PC-9 (cell line): ENCODE measurements at regions of chr3 and their contacts with region 1.

Region 1: GRCh38 chr3:101573449-101574387 is at the start of gene PCNP:
- DNase-seq: peak; percentile 99 to 100
- H3K4me3 ChIP-seq: peak within 1 kb of the TSS; percentile 87
- H3K27ac ChIP-seq: peak within 1 kb of the TSS; percentile 80
- H3K4me1 ChIP-seq: peaks cover 22% of the 10 kb centered on the region
- H3K27me3 ChIP-seq: no peaks in the 10 kb centered on the region
- CTCF ChIP-seq: peak; percentile 100
- total RNA-seq, gene PCNP: 164 and 223 TPM in 2 replicates

Region 2: DNA sequence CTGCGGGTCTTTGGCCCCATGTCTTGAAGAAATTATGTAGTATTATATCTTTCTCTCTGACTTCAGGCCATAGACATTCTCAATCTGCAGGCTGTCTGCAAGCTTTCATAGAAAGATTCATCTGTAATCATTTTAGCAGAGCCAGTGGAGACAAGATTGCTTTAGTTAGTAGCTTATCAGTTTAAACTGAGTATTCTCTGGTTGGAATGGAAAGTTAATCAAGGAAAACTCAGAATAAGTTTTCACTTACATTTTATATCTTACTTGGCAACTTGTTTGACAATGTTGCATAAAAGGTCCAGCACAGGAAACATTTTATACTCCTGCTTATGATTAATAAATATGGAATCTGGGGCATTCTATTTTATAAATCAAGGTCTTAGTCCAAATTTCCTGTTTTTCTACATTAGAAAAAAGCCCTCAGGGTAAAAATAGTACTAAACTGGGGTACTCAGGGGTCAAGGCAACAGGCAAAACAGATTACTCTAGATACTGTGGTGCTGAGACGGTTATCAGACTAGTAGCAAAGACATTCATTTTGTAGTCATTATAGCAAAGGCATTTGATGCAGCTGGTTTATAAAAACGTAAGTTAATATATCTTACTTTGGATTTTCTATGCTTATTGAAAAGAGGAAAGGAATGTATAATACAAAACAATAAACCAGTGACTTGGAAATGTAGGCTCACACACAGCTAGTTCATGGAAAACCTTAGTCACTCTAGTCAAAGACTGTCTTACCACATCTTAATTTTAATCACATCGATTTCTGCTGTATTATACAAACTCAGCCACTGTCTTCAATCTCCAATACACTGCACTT is 1414.2 kb before region 1 on chr3:
- CTCF ChIA-PET with region 1: no interaction called
- POLR2A ChIA-PET with region 1: interaction called, 10 read pairs
- intact Hi-C with region 1: no loop called
- DNase-seq: peak; percentile 29 to 97
- H3K4me3 ChIP-seq: peak overlapping the region; percentile 10
- H3K27ac ChIP-seq: peak overlapping the region; percentile 75
- H3K4me1 ChIP-seq: peaks cover 39% of the 10 kb centered on the region
- H3K27me3 ChIP-seq: no peaks in the 10 kb centered on the region
- CTCF ChIP-seq: no peak

Region 3: DNA sequence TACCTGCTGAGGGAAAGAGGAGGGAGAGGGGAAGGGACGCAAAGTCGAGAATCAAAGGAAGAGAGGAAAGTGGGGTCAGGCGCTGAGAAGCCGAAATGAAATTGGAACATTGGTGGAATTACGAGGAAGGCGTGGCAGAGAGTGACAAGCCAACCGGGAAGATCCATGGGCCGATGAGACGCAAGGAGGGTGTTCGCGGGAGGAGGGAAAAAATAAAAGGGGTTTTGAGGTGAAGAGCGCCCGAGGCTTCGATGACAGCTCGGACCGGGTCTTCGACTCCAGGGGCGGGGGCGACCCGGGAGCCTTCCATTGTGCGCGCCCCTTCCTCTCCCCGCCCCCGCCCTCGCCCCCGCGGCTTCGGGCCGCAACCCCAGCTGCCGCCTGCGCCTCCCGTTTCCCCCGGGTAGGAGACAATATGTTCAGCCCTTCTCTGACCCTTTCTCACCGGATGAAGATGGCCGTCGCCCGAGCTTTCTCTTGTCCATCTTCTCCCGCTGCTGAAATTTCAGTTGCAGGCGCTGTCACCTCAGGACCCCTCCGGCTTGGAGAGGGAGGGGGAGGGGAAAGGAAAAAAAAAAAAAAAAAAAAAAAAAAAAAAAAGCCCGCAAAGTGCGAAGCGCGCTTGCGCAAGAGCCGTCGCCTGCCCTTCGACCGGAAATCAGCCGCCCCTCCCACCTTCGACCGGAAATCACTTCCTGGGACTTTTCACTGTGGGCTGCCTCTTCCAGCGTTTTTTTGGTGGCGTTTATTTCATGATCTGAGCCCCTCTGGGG is 60.9 kb before region 1 on chr3 and contains the start of gene SENP7:
- CTCF ChIA-PET with region 1: no interaction called
- POLR2A ChIA-PET with region 1: interaction called, 8 read pairs
- intact Hi-C with region 1: loop called (anchors 1 kb)
- DNase-seq: peak; percentile 79 to 84
- H3K4me3 ChIP-seq: peak within 1 kb of the TSS; percentile 73
- H3K27ac ChIP-seq: peak within 1 kb of the TSS; percentile 83
- H3K4me1 ChIP-seq: peaks cover 21% of the 10 kb centered on the region
- H3K27me3 ChIP-seq: no peaks in the 10 kb centered on the region
- CTCF ChIP-seq: no peak
- total RNA-seq, gene SENP7: 11.1 and 17.4 TPM in 2 replicates

Region 4: GRCh38 chr3:101556064-101556463 is 17.7 kb before region 1 on chr3:
- CTCF ChIA-PET with region 1: interaction called, 9 read pairs
- POLR2A ChIA-PET with region 1: interaction called, 15 read pairs
- intact Hi-C with region 1: loop called (anchors 1 kb)
- DNase-seq: no peak
- H3K4me3 ChIP-seq: no peak overlapping the region
- H3K27ac ChIP-seq: no peak overlapping the region
- H3K4me1 ChIP-seq: peaks cover 5% of the 10 kb centered on the region; the same call in 1 of the 2 replicates
- H3K27me3 ChIP-seq: peaks cover 18% of the 10 kb centered on the region; the same call in 1 of the 2 replicates
- CTCF ChIP-seq: no peak

Region 5: DNA sequence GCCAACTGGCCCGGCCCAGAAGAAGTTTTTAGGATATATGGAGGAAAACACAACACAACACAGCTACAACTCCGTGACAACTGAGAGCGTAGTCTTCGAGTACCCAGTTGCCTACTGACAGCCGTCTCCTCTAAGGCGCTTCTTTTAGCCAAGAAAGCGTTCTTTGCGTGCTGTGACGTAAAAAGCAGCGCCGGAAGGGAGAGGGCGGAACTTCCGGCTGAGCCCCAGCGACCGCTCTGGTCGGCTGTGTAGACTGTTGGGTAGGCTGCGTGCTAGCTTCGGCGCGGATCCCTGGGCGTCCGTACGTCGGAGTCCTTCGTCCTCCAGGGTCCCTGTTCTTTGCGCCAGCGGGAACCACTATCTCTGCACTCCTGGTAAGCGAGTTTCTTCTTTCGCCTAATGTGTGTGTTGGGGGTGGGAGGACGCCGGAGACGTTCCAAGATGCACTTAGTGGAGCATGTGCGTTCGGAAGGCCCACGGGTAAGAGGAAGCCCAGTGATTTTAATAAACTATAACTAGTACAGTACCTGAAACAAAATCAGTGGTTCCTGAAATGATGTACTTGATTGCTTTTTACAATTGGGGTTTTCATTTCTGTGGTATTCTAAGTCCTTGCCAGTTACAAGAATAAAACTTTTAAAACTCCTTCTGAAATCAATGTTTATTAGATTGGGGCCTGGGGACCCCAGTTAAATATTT is 11.9 kb before region 1 on chr3 and contains the start of gene TRMT10C:
- CTCF ChIA-PET with region 1: interaction called, 12 read pairs
- POLR2A ChIA-PET with region 1: interaction called, 9 read pairs
- intact Hi-C with region 1: loop called (anchors 1 kb)
- DNase-seq: peak; percentile 92 to 95
- H3K4me3 ChIP-seq: peak within 1 kb of the TSS; percentile 79
- H3K27ac ChIP-seq: peak within 1 kb of the TSS; percentile 77
- H3K4me1 ChIP-seq: peaks cover 20% of the 10 kb centered on the region
- H3K27me3 ChIP-seq: peaks cover 13% of the 10 kb centered on the region; the same call in 1 of the 2 replicates
- CTCF ChIP-seq: 0 out of 2 replicates have a peak, but pooled peaks have one; percentile 25
- total RNA-seq, gene TRMT10C: 26.0 and 34.2 TPM in 2 replicates

Region 6: GRCh38 chr3:101758224-101758623 is 184.5 kb after region 1 on chr3:
- CTCF ChIA-PET with region 1: no interaction called
- POLR2A ChIA-PET with region 1: no interaction called
- intact Hi-C with region 1: no loop called
- DNase-seq: no peak
- H3K4me3 ChIP-seq: no peak overlapping the region
- H3K27ac ChIP-seq: no peak overlapping the region
- H3K4me1 ChIP-seq: no peaks in the 10 kb centered on the region
- H3K27me3 ChIP-seq: no peaks in the 10 kb centered on the region
- CTCF ChIP-seq: no peak